ENCODE measurements at regions of chr9 and their contacts with region 1.

Region 1: DNA sequence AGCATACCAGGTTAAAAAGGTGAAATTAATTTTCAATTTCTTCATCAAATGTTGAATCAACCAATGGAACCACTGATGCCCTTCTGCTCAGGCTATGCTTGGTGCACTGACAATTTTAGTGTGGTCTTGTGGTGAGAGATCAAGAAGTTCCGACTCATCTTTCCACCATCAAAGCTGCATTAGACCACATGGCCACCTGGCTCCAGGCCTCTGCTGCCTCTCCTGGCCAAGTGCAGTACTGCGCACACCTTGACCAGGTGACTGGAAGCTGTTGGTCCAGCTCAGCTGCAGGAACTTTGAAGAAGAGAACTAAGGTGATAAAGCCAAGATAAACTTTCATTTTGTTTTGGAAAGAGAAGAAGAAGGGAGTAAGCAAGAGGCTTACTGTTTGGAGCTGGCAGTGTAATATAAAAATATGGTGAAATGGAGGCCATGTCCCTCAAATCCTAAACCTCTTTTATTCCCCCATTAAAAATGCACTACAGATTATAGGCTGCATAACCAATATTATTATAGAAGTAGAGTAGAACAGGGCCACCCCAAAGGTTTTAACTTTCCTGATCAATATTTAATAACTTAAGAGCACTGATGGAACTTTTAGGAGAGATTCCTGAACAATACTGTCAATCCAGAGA is 315.5 kb upstream of the C9orf72 start:
- DNase-seq: peak; percentile 38
- H3K4me3 Mint-ChIP-seq: no peak overlapping the region
- H3K27ac Mint-ChIP-seq: no peak overlapping the region
- H3K4me1 Mint-ChIP-seq: no peaks in the 10 kb centered on the region
- H3K27me3 Mint-ChIP-seq: no peaks in the 10 kb centered on the region

Region 2: DNA sequence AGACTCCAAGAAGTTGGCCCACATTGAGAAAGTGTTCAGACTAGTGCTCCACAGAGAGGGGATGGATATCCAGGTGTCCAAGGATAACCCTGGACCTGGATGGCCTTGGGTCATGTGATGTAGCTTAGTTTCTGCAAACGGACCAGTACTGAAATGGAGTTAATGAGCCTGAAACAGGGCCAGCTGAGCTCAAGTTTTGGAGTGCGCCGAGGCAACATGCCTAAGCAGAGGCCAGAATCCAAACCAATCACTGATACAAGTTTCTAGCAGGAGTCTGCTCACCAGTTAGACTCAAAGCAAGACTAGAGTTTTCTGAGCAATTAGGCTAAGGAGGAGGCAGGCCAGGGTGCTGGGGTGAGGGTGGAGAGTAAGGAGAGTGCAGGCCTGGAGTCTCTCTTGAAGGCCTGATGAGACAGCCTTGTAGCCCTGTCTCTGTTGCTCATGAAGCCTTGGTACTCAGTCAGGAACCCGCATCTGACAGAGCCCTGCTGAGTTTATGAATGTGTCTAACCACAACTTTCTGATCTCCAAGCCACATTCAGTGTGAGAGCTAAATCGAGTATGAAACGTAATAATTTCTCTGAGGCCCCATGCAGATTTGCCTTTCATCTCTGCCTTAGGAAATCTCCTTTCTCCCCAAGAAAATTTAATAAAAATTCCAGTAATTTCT is 522.9 kb before region 1 on chr9:
- CTCF ChIA-PET with region 1: interaction called, 11 read pairs
- POLR2A ChIA-PET with region 1: no interaction called
- DNase-seq: peak; percentile 50
- H3K4me3 Mint-ChIP-seq: no peak overlapping the region
- H3K27ac Mint-ChIP-seq: peak overlapping the region; percentile 40
- H3K4me1 Mint-ChIP-seq: peaks cover 25% of the 10 kb centered on the region
- H3K27me3 Mint-ChIP-seq: peaks cover 25% of the 10 kb centered on the region

Region 3: GRCh38 chr9:27755846-27756245 is 132.9 kb before region 1 on chr9:
- CTCF ChIA-PET with region 1: no interaction called
- POLR2A ChIA-PET with region 1: no interaction called
- DNase-seq: no peak
- H3K4me3 Mint-ChIP-seq: no peak overlapping the region
- H3K27ac Mint-ChIP-seq: no peak overlapping the region
- H3K4me1 Mint-ChIP-seq: no peaks in the 10 kb centered on the region
- H3K27me3 Mint-ChIP-seq: no peaks in the 10 kb centered on the region

Region 4: GRCh38 chr9:27925815-27926214 is 37.0 kb after region 1 on chr9:
- CTCF ChIA-PET with region 1: no interaction called
- POLR2A ChIA-PET with region 1: no interaction called
- DNase-seq: no peak
- H3K4me3 Mint-ChIP-seq: no peak overlapping the region
- H3K27ac Mint-ChIP-seq: no peak overlapping the region
- H3K4me1 Mint-ChIP-seq: no peaks in the 10 kb centered on the region
- H3K27me3 Mint-ChIP-seq: no peaks in the 10 kb centered on the region

Measured in activated CD4-positive, alpha-beta memory T cell treated with anti-CD3 and anti-CD28 coated beads, Interleukin-2, amount 10 ng/mL, durations not matched to agents 7 days and 5 days (primary cell).